Common myeloid progenitor, CD34-positive (primary cell): ENCODE measurements at regions of chr19 and their contacts with region 1.

Region 1: DNA sequence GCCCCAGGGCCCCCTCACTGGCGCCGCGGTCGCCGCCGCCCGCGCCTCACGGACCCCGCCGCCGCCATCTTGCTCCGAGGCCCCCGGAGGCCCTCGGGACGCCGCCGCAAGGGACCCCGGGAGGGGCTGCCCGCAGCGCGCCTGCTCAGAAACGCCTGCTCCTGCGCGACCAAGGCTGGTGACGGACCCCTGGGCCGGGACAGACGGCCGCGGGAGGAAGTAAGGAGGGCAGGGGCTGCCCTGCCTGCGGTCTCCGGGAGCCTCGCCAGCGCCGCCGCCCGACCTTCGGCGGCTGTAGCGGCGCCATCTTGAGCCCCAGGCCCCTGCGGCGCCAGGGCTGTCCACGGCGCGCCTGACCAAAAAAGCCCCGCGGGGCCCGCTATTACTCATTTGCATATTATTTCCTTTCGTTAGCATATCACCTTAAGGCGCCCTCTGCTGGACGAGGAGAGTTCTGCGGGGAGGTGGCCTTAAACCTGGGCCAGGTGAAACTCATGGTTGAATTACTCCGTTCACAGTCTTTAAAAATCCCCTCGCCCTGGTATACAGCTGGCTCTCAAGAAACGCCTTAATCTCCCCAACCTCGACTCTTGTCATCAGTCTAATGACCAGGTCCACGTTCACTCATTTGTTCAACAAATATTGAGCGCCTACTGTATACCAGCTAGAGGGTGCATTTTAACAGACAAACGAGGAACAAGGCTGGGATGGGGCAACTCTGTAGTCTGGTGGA is at the start of gene REXO1:
- DNase-seq: peak; percentile 95 to 97 (median 97)
- H3K4me3 ChIP-seq: peak within 1 kb of the TSS; percentile 61 to 100 (median 90)
- H3K27ac ChIP-seq: peak within 1 kb of the TSS; percentile 96 to 99
- H3K4me1 ChIP-seq: peaks cover 5 to 73% (median 62%) of the 10 kb centered on the region in 4 experiments
- H3K27me3 ChIP-seq: no peaks in the 10 kb centered on the region

Region 2: GRCh38 chr19:1725100-1726064 is 123.2 kb before region 1 on chr19:
- CTCF ChIA-PET with region 1: no interaction called
- POLR2A ChIA-PET with region 1: no interaction called
- DNase-seq: no peak
- H3K4me3 ChIP-seq: peak overlapping the region in 2 of 7 experiments; percentile 11 to 42
- H3K27ac ChIP-seq: no peak overlapping the region
- H3K4me1 ChIP-seq: peaks cover 0 to 4% (median 1%) of the 10 kb centered on the region in 4 experiments
- H3K27me3 ChIP-seq: peaks cover 7 to 97% (median 26%) of the 10 kb centered on the region in 5 experiments

Region 3: GRCh38 chr19:1837625-1838105 is 10.9 kb before region 1 on chr19:
- CTCF ChIA-PET with region 1: interaction called, 50 read pairs
- POLR2A ChIA-PET with region 1: interaction called, 5 read pairs
- DNase-seq: peak; percentile 33 to 63 (median 55)
- H3K4me3 ChIP-seq: no peak overlapping the region
- H3K27ac ChIP-seq: peak overlapping the region in 1 of 2 experiments; percentile 64
- H3K4me1 ChIP-seq: peaks cover 0 to 27% (median 19%) of the 10 kb centered on the region in 4 experiments
- H3K27me3 ChIP-seq: no peaks in the 10 kb centered on the region

Region 4: GRCh38 chr19:1905071-1905862 is 56.7 kb after region 1 on chr19 and contains the starts of genes ADAT3 and SCAMP4:
- CTCF ChIA-PET with region 1: no interaction called
- POLR2A ChIA-PET with region 1: no interaction called
- DNase-seq: peak; percentile 98 to 99 (median 99)
- H3K4me3 ChIP-seq: peak within 1 kb of the TSS; percentile 49 to 81 (median 74)
- H3K27ac ChIP-seq: peak within 1 kb of the TSS in 1 of 2 experiments; percentile 79
- H3K4me1 ChIP-seq: peaks cover 2 to 59% (median 50%) of the 10 kb centered on the region in 4 experiments
- H3K27me3 ChIP-seq: no peaks in the 10 kb centered on the region